ENCODE measurements at regions of chr3 and their contacts with region 1.

Region 1: DNA sequence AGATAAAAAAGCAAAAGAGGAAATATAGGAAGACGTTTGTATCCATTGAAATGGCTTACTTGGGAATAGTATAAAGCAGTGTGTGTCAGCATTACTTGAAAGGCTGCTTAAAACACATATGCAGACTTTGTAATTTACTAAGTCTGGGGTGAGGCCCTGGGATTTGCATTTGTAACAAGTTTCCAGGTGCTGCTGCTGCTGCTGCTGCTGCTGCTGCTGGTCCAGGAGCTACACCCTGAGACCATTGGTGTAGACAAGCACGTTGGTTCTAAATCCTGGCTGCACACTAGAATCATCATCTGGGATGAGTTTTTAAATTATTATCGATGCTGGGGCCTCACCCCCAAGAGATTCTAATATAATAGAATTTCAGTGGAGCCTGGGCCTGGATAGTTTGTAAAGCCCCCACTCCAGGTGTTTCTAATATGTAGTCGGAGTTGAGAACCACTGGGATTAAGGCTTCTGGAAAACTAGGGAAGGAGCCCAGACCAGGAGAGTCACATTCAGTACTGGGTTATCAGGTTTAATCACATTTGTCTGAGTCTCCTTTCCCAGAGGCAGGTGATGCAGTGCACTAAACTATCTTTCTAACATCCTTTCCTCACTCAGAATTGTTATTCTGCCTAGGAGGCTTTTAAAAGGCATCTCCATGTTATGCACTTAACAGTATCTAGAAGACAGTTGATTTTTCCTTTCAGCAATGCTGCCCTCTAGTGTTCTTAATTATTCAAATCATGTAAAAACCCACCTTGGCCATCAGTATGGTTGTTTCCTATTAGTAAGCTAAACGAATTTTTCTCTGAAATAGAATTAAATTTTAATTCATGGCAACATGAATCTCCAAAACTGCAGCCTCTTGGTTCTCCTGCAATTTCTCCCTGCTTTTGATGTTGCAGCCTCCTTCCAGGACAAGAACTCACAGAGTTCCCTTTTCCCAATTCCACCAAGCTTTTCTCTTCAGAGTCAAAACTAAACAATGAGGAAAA is 45.4 kb downstream of the SSR3 start:
- DNase-seq: peak; percentile 86
- ATAC-seq: peak; percentile 62
- H3K4me3 ChIP-seq: no peak overlapping the region
- H3K27ac ChIP-seq: no peak overlapping the region
- H3K4me1 ChIP-seq: peaks cover 19% of the 10 kb centered on the region
- H3K27me3 ChIP-seq: 0 out of 2 replicates have a peak, but pooled peaks cover 3% of the 10 kb centered on the region
- CTCF ChIP-seq: peak; percentile 75

Region 2: GRCh38 chr3:155995525-155996351 is 513.7 kb before region 1 on chr3:
- CTCF ChIA-PET with region 1: no interaction called
- POLR2A ChIA-PET with region 1: no interaction called
- intact Hi-C with region 1: loop called (anchors 5 kb)
- DNase-seq: peak; percentile 67
- ATAC-seq: peak; percentile 97
- H3K4me3 ChIP-seq: no peak overlapping the region
- H3K27ac ChIP-seq: no peak overlapping the region
- H3K4me1 ChIP-seq: no peaks in the 10 kb centered on the region
- H3K27me3 ChIP-seq: no peaks in the 10 kb centered on the region
- CTCF ChIP-seq: peak; percentile 70

Region 3: DNA sequence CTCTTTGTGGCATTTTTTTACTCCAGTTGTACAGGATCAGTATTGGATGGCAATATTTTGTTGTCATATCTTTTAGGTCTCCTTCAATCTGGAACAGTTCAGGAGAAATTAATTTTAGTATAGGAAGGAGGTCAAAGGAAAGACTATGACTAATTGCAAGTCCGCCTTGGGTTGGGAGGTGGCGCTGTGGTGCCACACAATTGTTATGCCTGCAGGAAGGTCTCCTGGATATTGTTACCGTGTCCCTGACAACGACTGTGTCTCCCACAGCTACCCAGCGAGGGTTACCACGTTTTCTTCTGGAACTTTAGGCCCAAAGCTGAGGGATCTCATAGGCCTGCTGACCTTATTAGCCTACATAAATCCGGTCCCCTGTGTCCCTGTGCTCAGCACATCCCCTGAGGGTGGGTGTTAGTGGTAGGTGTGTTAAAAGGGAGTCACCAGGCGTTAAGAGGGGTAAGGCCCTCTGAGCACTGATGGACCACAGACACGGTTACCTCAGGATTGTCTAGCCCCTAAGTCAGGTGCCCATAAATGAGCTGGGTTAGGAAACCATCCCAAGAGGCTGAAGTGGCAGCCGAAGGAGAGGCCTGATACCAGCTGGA is 357.6 kb before region 1 on chr3:
- CTCF ChIA-PET with region 1: interaction called, 10 read pairs
- POLR2A ChIA-PET with region 1: no interaction called
- intact Hi-C with region 1: loop called (anchors 1 kb)
- DNase-seq: peak; percentile 80
- ATAC-seq: peak; percentile 80
- H3K4me3 ChIP-seq: no peak overlapping the region
- H3K27ac ChIP-seq: no peak overlapping the region
- H3K4me1 ChIP-seq: no peaks in the 10 kb centered on the region
- H3K27me3 ChIP-seq: no peaks in the 10 kb centered on the region
- CTCF ChIP-seq: peak; percentile 88

Region 4: DNA sequence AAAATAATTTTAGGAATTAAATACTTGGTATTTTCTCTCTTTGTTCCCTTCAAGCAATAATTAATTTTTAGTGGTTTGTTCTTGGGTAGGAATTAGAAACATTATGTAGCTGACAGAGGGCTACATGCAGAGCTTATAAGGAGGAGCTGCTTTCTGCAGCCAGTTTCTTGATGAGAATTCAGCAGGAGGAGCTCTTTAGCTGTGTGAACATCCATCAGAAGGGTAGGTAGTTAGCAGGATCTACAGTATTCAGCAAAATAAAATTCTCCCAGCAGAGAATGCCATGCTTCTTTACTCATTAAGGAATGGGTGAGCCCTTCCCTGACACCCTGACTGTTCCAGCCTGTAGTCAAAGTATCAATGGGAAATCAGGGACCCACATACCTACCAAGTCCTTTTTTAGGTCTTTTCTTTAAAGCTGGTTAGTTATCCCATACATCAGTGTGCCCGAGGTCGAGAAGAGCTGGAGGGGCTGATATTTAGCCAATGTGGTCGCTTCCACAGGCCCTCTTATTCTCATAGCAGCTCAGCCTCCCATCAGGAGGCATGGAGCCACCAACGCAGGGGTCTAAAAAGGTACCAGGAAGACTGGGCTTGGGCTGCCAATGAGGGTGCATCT is 335.1 kb before region 1 on chr3:
- CTCF ChIA-PET with region 1: interaction called, 16 read pairs
- POLR2A ChIA-PET with region 1: no interaction called
- intact Hi-C with region 1: loop called (anchors 1 kb)
- DNase-seq: peak; percentile 65
- ATAC-seq: peak; percentile 85
- H3K4me3 ChIP-seq: no peak overlapping the region
- H3K27ac ChIP-seq: no peak overlapping the region
- H3K4me1 ChIP-seq: no peaks in the 10 kb centered on the region
- H3K27me3 ChIP-seq: no peaks in the 10 kb centered on the region
- CTCF ChIP-seq: peak; percentile 60

Region 5: GRCh38 chr3:156382458-156383346 is 126.8 kb before region 1 on chr3:
- CTCF ChIA-PET with region 1: interaction called, 8 read pairs
- POLR2A ChIA-PET with region 1: no interaction called
- intact Hi-C with region 1: loop called (anchors 5 kb)
- DNase-seq: peak; percentile 76
- ATAC-seq: peak; percentile 91
- H3K4me3 ChIP-seq: no peak overlapping the region
- H3K27ac ChIP-seq: no peak overlapping the region
- H3K4me1 ChIP-seq: no peaks in the 10 kb centered on the region
- H3K27me3 ChIP-seq: peaks cover 84% of the 10 kb centered on the region
- CTCF ChIP-seq: peak; percentile 88

Region 6: DNA sequence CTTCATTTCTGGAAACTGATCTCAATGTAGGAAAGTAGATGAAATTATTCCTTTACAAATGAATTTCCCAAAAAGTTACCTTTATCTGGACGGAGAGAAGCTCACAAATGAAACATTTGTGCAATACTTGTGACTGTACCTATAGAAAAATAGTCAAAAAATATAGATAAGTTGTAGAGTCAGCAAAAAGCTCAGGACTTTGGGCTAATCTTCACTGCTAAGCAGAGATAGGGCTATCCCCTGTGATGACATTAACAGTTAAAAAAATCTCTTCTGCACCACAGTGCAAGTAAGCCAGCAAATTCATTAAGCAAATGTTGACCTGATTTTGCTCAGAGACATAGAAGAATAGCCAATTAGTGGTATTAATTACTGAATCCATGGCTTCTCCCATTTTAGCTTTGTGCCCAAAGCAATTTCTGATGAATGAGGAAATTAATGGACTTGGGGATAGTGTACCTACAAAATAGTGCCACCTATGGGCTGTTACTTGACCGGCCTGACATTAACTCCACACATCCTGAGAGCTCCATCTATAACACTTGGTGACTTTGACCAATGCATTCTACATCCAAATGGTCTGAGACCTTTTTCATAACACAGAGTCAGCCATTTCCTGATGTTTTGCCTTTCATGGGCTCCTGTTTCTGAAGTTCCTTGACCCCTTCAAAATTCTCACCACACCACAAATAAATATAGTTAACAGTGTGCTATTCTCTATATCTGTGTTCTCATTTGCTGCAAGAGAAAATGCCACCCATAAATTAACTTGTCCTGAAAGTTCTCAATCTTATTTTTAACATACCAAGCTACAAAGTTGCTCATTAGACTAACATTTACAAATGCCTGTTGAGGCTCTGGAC is 59.5 kb before region 1 on chr3:
- CTCF ChIA-PET with region 1: interaction called, 11 read pairs
- POLR2A ChIA-PET with region 1: no interaction called
- intact Hi-C with region 1: loop called (anchors 1 kb)
- DNase-seq: peak; percentile 64
- ATAC-seq: peak; percentile 88
- H3K4me3 ChIP-seq: no peak overlapping the region
- H3K27ac ChIP-seq: no peak overlapping the region
- H3K4me1 ChIP-seq: no peaks in the 10 kb centered on the region
- H3K27me3 ChIP-seq: peaks cover 23% of the 10 kb centered on the region
- CTCF ChIP-seq: peak; percentile 82

Region 7: GRCh38 chr3:156472150-156472549 is 37.3 kb before region 1 on chr3:
- CTCF ChIA-PET with region 1: interaction called, 7 read pairs
- POLR2A ChIA-PET with region 1: no interaction called
- intact Hi-C with region 1: loop called (anchors 1 kb)
- DNase-seq: peak; percentile 11
- ATAC-seq: peak; percentile 56; the same call in 1 of the 2 replicates
- H3K4me3 ChIP-seq: no peak overlapping the region
- H3K27ac ChIP-seq: no peak overlapping the region
- H3K4me1 ChIP-seq: no peaks in the 10 kb centered on the region
- H3K27me3 ChIP-seq: peaks cover 27% of the 10 kb centered on the region
- CTCF ChIP-seq: peak; percentile 42

Region 8: DNA sequence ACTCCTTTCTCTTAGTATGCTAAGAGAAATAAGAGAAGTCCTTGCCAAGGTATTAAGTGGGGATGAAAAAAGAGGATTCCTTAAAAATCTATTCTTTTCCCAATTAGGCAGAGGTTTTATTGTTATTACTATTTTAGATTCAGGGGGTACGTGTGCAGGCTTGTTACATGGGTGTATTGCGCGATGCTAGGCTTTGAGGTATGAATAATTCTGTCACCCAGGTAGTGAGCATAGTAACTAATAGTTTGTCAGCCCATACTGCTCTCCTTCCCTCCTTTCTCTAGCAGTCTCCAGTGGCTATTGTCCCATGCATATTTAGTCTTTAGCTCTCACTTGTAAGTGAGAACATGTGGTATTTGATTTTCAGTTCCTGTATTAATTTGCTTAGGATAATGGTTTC is 400.5 kb after region 1 on chr3:
- CTCF ChIA-PET with region 1: no interaction called
- POLR2A ChIA-PET with region 1: no interaction called
- intact Hi-C with region 1: no loop called
- DNase-seq: no peak
- ATAC-seq: no peak
- H3K4me3 ChIP-seq: no peak overlapping the region
- H3K27ac ChIP-seq: no peak overlapping the region
- H3K4me1 ChIP-seq: no peaks in the 10 kb centered on the region
- H3K27me3 ChIP-seq: no peaks in the 10 kb centered on the region
- CTCF ChIP-seq: no peak

Measured in PC-3 (cell line).